ENCODE measurements at regions of chrX and their contacts with region 1.

Region 1: DNA sequence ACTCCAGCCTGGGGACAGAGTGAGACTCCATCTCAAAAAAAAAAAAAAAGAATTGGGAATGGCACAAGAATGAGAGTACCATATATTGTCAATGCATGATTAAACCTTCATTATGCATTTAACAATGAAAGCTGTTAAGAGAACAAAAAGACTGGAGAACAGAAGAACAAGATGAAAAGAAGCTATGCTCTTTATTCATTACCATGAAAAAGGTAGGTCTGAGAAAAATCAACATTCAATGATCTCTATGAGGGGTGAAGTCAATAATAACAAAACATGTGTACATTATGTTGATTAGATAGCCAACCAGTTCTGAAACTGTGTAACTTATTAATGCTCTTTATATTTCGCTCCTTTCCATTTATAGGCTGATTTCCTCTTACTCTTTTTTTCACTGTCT is 100.9 kb downstream of the BRWD3 start:
- DNase-seq: no peak
- H3K4me3 ChIP-seq: no peak overlapping the region
- H3K27ac ChIP-seq: no peak overlapping the region
- H3K4me1 ChIP-seq: no peaks in the 10 kb centered on the region
- H3K27me3 ChIP-seq: no peaks in the 10 kb centered on the region
- CTCF ChIP-seq: no peak
- EP300 ChIP-seq: no peak
- POLR2A ChIP-seq: no peak

Region 2: GRCh38 chrX:80721185-80721584 is 12.4 kb after region 1 on chrX:
- in situ Hi-C with region 1: no loop called
- intact Hi-C with region 1: loop called (anchors 1 kb)
- DNase-seq: no peak
- H3K4me3 ChIP-seq: no peak overlapping the region
- H3K27ac ChIP-seq: no peak overlapping the region
- H3K4me1 ChIP-seq: no peaks in the 10 kb centered on the region
- H3K27me3 ChIP-seq: no peaks in the 10 kb centered on the region
- CTCF ChIP-seq: no peak
- EP300 ChIP-seq: no peak
- POLR2A ChIP-seq: no peak